ENCODE measurements at regions of chr1 and their contacts with region 1.

Region 1: DNA sequence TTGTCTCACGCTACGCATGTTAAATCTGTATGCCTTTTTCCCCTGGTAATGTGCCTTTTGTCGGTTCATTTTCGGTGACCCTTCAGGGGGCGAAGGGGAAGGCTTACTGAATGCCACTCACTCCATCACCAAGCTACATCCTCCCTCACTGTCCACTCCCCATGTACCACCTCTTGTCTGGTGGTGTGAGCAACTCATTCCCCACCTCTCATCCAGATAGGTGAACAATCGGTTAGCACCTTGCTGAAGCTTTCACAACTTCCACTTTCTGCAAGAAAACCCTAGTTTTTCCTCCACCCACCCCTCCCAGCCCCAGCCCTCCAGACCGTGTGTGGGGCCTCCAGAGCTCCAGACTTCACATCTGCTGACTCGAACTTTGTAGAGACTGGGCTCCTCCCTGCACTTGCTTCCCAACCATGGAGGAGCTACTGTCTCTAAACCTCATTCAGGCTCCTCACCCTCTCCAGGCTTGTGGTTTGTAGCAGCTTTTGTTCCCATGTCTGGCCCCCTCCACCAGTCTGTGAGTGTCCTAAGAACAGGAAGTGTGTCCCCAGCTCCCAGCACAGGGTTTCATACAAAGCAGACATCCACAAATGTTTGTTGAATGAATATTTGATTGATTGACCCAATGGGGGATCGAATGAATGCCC is 48.4 kb upstream of the RUNX3 start:
- DNase-seq: no peak
- ATAC-seq: no peak
- H3K4me3 ChIP-seq: no peak overlapping the region
- H3K27ac ChIP-seq: no peak overlapping the region
- H3K4me1 ChIP-seq: no peaks in the 10 kb centered on the region
- H3K27me3 ChIP-seq: peaks cover 0 to 30% (median 8%) of the 10 kb centered on the region in 7 donors
- CTCF ChIP-seq: no peak

Region 2: DNA sequence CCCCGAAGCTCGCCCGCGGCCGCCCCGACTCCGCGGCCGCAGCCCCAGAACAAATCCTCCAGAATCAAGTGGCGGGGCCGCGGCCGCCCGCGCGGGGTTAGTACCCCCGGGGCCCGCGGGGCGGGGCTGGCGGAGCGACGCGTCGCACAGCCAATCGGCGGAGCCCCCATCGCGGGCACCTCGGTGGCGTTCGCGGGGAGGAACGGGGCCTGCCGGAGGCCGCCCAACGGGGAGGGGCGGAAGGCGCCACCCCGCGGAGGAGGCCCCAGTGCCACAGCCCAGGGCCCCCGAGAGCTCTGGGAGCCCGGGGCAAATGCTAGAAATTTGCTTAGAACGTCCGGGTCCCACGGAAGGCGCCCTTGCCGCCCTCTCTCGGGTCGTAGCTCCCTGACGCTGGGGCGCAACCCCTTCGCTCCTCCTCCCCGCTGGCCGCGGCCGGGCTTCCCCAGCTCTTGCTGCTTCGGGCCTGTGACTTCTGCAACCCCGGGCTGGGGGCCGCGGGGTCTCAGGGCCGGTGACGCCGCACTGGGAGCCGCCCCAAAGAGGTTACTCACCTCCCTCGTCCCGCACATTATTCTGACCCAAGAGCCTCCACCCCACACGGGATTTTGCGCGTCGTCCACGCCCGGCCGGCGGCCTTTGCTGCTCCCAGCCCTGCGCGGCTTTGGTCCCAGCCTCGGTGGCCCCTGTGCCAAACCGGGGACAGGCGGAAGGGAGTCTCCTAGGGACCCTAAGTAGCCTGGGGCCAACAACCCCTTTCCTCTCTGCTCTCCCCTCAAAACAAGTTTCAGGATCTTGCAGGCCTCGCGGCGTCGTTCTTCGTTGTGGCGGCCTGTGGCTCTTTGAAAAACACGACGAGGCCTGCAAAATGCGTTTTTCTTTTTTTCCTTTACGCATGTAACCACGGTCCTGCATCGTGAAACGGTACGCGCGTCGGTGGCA is 48.0 kb before region 1 on chr1 and contains the start of gene RUNX3:
- intact Hi-C with region 1: no loop called
- DNase-seq: peak in 1 of 2 donors; percentile 70
- ATAC-seq: peak in 5 of 8 donors; percentile 38 to 72 (median 65)
- H3K4me3 ChIP-seq: peak within 1 kb of the TSS in 9 of 10 donors; percentile 3 to 65 (median 35)
- H3K27ac ChIP-seq: peak within 1 kb of the TSS in 2 of 10 donors; percentile 22 to 91
- H3K4me1 ChIP-seq: peaks cover 5 to 61% (median 26%) of the 10 kb centered on the region in 9 donors
- H3K27me3 ChIP-seq: peaks cover 59 to 98% (median 97%) of the 10 kb centered on the region in 7 donors
- CTCF ChIP-seq: peak in 1 of 9 donors; percentile 35
- total RNA-seq, gene RUNX3: 0.15 to 5.9 (median 0.40) TPM

Region 3: DNA sequence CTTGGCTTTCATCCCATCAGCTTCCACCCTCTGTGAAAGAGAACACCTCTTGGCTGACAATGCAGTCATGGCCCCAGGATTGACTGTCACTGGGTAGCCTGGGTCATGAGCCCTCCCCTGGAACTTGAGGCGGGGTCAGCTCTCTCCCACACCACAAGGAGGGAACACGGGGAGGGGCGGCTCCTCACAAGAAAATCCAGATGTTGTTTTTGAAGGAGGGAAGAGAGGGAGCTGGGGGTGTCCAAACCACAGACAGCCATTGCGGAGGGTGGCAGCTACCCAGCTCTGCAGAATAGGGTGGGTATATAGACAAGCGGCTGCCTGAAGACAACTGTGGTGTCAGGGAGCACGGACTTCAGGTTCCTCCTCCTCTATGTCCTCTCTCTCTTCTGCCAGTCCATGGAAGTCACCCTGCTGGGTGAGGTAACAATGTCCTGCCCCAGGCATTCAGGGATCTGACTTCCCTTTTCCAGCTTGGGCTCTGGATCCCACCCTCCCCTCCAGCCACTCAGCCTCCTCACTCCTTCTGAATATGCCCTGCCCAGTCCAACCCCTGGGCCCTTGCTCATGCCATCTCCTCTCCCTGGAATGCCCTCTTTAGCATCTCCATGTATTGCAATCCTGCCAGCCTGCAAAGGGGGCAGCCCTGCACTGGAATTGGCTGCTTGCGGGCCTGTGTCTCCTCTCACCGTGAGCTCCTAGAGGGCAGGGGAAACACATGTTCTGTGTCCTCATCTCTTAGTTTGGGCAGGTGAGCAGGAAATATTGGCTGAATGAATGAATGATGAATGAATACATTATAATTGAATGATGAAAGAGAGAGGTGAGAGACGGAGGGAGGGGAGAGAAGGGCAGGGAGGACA is 12.5 kb after region 1 on chr1:
- intact Hi-C with region 1: no loop called
- DNase-seq: no peak
- ATAC-seq: no peak
- H3K4me3 ChIP-seq: no peak overlapping the region
- H3K27ac ChIP-seq: peak overlapping the region in 1 of 10 donors; percentile 83
- H3K4me1 ChIP-seq: peaks cover 0 to 18% (median 0%) of the 10 kb centered on the region in 9 donors
- H3K27me3 ChIP-seq: peaks cover 0 to 51% (median 21%) of the 10 kb centered on the region in 7 donors
- CTCF ChIP-seq: no peak

Region 4: DNA sequence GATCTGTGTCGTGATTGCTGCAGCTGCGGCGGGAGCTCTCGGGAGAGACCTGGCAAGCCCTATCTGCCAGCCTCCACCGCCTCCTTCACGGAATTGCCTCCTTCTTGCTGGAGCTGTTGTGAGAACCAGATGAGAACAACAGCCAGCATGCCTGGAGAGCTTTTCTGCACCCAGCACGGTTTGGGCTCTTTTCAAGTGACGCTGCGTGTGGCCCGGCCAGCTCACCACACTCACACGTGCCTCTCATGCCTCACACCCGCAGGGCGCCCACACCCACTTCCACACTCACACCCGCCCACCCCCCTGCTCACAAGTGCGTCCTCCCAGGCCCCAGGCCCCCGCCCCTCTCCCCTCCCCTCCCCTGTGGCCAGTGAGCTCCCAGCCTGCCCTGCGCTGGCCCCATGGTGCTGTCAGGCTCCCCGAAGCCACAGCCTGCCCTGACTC is 87.3 kb after region 1 on chr1:
- intact Hi-C with region 1: loop called in 1 of 10 experiments (anchors 5 kb)
- DNase-seq: peak in 1 of 2 donors; percentile 19
- ATAC-seq: peak in 3 of 8 donors; percentile 38 to 46 (median 42)
- H3K4me3 ChIP-seq: peak overlapping the region in 1 of 10 donors; percentile 7
- H3K27ac ChIP-seq: no peak overlapping the region
- H3K4me1 ChIP-seq: peaks cover 0 to 8% (median 0%) of the 10 kb centered on the region in 9 donors
- H3K27me3 ChIP-seq: peaks cover 0 to 21% (median 6%) of the 10 kb centered on the region in 7 donors
- CTCF ChIP-seq: no peak

Measured in heart right ventricle (tissue), 16 donors.